Endothelial cell of umbilical vein (primary cell): ENCODE measurements at regions of chr20 and their contacts with region 1.

Region 1: DNA sequence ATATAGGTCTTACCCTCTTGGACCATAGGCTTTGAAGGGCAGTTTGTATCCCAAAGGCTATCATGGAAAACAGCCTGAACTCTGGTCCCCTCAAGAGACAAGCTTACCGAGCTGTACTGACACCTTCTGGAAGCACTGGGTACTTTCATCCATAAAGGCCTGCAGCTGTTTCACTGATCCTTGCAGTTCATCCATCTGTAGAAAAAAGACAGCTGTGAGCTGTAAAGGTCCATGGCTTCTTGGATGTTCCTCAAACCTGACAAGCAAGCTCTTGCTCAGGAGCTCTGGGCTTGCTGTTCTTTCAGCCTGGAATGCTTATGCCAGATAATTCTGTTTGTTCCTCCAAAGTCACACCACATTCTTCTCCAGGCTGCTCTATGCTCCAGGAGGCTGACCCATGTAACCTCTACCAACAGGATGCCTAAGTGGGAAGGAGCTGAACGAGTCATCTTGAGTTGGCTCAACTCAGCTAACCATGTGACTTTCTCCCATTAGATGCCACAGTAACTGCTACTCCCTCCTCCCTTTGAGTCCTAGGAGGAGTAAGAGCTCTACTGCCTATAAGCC is 8.8 kb upstream of the NDRG3 start:
- DNase-seq: peak; percentile 78
- H3K4me3 ChIP-seq: no peak overlapping the region
- H3K27ac ChIP-seq: peak overlapping the region; percentile 16
- H3K4me1 ChIP-seq: peaks cover 27% of the 10 kb centered on the region
- H3K27me3 ChIP-seq: no peaks in the 10 kb centered on the region
- CTCF ChIP-seq: peak; percentile 71 to 75
- POLR2A ChIP-seq: no peak

Region 2: DNA sequence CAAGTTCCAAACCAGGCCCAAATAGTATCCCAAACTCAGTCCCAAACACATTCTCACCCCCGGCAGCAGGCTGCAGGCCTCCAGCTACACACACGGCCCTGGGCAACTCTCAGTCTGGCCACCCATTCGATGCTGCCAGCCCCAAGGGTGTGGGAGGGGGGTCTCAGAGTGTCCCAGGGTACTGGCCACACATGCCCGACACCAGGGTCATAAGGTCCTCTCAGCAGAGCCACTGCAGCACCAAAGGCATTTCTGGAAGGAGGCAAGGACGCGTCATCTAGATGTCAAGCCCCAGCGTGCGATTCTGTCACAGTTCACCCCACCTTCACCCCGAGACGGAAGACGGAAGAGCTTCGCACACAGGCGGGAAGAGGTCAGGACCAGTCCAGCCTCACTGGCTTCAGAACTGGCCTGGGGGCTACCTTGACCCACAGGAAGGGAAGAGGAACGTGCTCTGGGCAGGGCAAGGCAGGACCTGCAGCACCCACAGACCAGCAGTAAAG is 203.9 kb before region 1 on chr20:
- CTCF ChIA-PET with region 1: no interaction called
- POLR2A ChIA-PET with region 1: no interaction called
- dilution Hi-C with region 1: no loop called
- intact Hi-C with region 1: loop called (anchors 1 kb)
- DNase-seq: no peak
- H3K4me3 ChIP-seq: no peak overlapping the region
- H3K27ac ChIP-seq: no peak overlapping the region
- H3K4me1 ChIP-seq: no peaks in the 10 kb centered on the region
- H3K27me3 ChIP-seq: no peaks in the 10 kb centered on the region
- CTCF ChIP-seq: no peak
- POLR2A ChIP-seq: no peak

Region 3: DNA sequence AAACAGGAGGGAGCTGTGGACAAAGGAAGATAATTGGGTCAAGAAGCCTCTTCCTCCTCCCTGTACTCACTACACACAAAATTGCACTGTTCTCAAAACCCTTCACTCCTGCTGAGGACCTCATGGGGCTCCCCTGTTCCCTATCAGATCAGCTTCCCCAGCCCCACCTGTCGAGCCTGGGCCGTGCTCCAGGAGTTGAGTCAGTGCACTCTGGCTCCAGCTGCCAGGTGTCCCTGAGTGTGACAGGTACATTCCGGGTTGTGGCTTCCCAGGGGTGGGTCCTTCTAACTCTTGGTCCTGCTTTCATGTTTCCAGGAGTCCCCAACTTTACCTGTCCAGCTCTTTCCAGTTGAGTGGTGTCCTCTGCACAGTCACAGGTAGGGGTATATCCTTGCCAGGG is 140.8 kb before region 1 on chr20:
- CTCF ChIA-PET with region 1: interaction called, 42 read pairs
- POLR2A ChIA-PET with region 1: no interaction called
- dilution Hi-C with region 1: no loop called
- intact Hi-C with region 1: loop called (anchors 1 kb)
- DNase-seq: no peak
- H3K4me3 ChIP-seq: no peak overlapping the region
- H3K27ac ChIP-seq: no peak overlapping the region
- H3K4me1 ChIP-seq: no peaks in the 10 kb centered on the region
- H3K27me3 ChIP-seq: no peaks in the 10 kb centered on the region
- CTCF ChIP-seq: no peak
- POLR2A ChIP-seq: no peak

Region 4: DNA sequence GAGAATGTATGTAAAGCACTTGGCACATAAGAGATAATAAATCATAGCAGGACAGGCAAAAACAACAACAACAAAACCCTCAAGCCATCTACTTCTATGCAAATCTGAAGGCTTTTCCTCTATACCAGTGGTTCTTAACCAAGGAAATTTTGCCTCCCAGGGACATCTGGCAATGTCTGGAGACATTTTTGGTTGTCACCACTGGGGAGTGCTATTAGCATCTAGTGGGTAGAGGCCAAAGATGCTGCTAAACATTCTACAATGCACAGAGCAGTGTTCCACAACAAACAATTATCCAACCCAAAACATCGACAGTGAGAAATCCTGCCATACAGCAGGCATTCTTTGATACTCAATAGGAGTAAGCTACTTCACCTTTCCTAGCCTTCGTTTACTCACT is 37.1 kb before region 1 on chr20:
- CTCF ChIA-PET with region 1: interaction called, 14 read pairs
- POLR2A ChIA-PET with region 1: no interaction called
- dilution Hi-C with region 1: no loop called
- intact Hi-C with region 1: no loop called
- DNase-seq: peak; percentile 24
- H3K4me3 ChIP-seq: no peak overlapping the region
- H3K27ac ChIP-seq: no peak overlapping the region
- H3K4me1 ChIP-seq: no peaks in the 10 kb centered on the region
- H3K27me3 ChIP-seq: no peaks in the 10 kb centered on the region
- CTCF ChIP-seq: peak in 1 of 2 donors; percentile 18
- POLR2A ChIP-seq: no peak

Region 5: DNA sequence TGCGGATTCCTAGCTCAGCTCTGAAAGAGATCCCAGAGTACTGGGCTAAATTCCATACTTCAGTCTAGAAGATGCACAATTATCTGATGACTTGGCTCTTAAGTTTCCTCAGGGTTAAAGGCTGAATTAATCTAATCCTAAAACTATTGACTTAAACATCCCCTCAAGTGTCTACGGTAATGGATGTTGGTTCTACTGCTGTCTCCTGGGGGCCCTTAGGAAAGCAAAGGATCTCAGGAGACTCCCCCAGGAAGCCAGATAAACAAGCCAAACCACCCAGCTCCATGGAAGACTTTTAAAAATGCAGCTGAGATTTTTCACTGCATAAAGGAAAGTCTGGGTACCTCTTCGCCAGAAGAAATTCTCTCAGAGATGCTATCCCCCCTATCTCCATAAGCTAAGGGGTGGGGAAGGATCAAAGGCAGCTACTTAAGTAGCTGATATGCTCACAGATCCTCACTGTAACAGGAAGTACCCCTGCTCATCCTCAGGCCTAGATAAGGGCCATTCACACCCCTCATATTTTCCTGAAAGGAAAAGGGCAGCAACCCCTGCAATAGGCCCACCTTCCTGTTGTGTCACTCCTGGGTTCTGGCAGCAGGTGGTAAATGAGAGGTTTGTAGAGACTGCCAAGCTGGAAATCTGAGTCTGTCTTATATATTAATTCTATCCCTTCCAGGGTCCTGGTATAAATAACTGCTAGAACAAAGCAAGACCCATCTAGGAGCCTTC is 18.1 kb before region 1 on chr20:
- CTCF ChIA-PET with region 1: interaction called, 11 read pairs
- POLR2A ChIA-PET with region 1: no interaction called
- dilution Hi-C with region 1: no loop called
- intact Hi-C with region 1: no loop called
- DNase-seq: no peak
- H3K4me3 ChIP-seq: no peak overlapping the region
- H3K27ac ChIP-seq: no peak overlapping the region
- H3K4me1 ChIP-seq: no peaks in the 10 kb centered on the region
- H3K27me3 ChIP-seq: no peaks in the 10 kb centered on the region
- CTCF ChIP-seq: no peak
- POLR2A ChIP-seq: no peak

Region 6: DNA sequence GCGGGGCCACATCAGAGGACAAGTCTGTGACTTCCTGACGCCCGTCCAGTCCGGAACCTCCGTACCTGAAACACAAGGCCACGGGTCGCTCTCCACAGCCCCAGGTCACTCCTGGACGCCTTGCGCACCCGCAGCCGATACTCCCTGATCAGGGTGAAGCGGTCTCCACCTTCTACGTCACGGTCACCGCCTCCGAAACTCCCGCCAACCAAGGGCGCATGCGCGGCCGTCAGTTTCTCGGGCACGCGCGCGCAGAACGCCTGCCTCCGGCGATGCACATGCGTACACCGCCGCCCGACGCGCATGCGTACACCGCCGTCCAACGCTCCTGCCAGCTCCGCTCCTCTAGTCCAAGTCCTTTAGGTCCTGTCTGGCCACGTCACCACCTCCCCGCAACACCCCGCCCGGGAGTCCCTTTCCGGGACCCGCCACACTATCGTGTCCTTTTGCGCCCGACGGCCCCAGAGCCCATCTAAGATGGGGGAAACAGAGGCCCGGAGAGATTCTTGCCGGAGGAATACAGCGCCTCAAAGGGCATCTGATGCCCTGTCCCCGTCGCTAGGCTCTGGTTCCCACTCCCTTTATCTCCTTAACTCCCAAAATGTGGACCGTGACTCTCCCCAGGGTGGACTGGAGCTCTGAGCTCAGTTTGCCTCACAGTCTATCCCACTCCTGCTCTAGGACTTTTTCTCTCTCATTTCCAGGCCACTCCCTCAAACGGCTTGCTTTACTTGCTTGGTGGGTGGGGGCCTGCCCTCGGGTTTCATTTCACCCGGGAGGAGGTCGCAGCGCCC is 19.1 kb after region 1 on chr20 and contains the start of gene DSN1:
- CTCF ChIA-PET with region 1: interaction called, 50 read pairs
- POLR2A ChIA-PET with region 1: no interaction called
- dilution Hi-C with region 1: no loop called
- intact Hi-C with region 1: loop called (anchors 1 kb)
- DNase-seq: peak; percentile 99
- H3K4me3 ChIP-seq: peak within 1 kb of the TSS; percentile 53 to 90 (median 79)
- H3K27ac ChIP-seq: peak within 1 kb of the TSS; percentile 89
- H3K4me1 ChIP-seq: peaks cover 17% of the 10 kb centered on the region
- H3K27me3 ChIP-seq: no peaks in the 10 kb centered on the region
- CTCF ChIP-seq: peak in 1 of 2 donors; percentile 79
- POLR2A ChIP-seq: peak; percentile 86
- total RNA-seq, gene DSN1: 24.4 and 25.0 TPM in 2 replicates